Psoas muscle (tissue), 8 donors: ENCODE measurements at regions of chr2 and their contacts with region 1.

Region 1: GRCh38 chr2:98157557-98157956 is 70.6 kb downstream of the VWA3B start:
- DNase-seq: no peak
- ATAC-seq: no peak
- H3K4me3 ChIP-seq: no peak overlapping the region
- H3K27ac ChIP-seq: peak overlapping the region; percentile 94
- H3K4me1 ChIP-seq: peaks cover 50% of the 10 kb centered on the region
- H3K27me3 ChIP-seq: no peaks in the 10 kb centered on the region
- CTCF ChIP-seq: no peak

Region 2: DNA sequence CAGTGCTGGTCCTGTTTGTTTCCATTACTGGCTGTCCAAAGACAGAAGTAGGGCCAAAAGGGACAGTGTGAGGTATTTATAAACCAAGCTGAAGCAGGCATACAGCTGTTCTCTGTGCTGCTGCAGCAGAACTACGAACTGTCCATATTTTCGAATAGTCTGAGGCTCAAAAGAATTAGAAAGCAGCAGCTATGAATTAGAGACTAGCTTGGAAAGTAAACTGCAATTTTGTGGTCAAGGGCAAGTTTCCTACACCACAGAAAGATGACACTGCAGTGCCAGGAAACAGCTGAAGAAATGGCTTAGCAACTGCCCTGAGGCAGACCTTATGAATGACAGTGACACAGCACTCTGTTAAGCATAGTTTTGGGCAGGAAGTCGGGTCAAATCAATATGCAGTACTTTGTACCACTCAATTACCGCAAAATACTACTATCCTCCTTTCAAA is 287.1 kb before region 1 on chr2:
- intact Hi-C with region 1: loop called in 1 of 2 experiments (anchors 5 kb)
- DNase-seq: no peak
- ATAC-seq: peak; percentile 84 to 91 (median 86)
- H3K4me3 ChIP-seq: peak overlapping the region; percentile 33
- H3K27ac ChIP-seq: peak overlapping the region; percentile 93
- H3K4me1 ChIP-seq: peaks cover 43% of the 10 kb centered on the region
- H3K27me3 ChIP-seq: no peaks in the 10 kb centered on the region
- CTCF ChIP-seq: no peak

Region 3: DNA sequence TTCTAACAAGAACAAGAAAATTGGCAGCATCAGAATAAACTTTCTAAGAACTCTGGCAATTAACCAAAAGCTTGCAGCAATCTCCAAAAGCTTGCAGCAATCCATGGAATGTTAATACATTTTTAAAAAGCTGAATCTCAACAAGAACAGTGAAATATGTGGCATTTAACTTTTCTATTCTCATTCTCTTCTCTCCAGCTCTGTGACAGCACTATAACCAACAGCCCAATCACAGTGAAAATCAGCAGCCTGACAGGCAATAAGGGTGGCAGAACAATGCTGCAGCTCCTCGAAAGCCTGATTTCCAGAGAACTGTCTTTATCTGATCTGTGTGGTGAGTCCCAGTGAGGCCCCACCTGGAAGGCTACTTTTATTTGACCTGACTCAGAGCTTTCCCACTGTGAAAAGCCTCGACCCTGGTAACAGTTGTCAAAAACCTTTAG is 221.8 kb before region 1 on chr2:
- intact Hi-C with region 1: loop called in 1 of 2 experiments (anchors 10 kb)
- DNase-seq: no peak
- ATAC-seq: peak; percentile 23 to 38 (median 36)
- H3K4me3 ChIP-seq: peak overlapping the region; percentile 13
- H3K27ac ChIP-seq: peak overlapping the region; percentile 73
- H3K4me1 ChIP-seq: peaks cover 59% of the 10 kb centered on the region
- H3K27me3 ChIP-seq: no peaks in the 10 kb centered on the region
- CTCF ChIP-seq: no peak

Region 4: DNA sequence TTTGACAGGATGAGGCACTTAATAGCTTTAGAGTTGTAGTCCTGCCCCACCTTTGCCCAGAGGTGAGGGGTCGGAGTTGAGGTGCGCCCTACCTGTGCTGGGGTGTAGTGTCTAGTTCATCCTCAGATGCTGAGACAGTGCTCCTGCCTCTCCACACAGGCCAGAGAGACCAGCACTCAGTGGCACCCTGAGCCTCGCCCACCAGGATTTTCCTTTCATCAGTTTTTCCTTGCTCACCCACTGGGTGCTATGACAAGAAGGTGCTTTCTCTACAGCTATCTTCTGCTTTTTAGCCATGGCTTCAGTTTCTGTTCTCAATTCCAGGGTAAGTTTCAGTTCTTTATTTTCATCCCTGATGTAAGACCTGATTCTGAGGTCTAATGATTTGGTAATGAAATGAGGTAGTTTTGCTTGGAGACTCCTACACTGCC is 145.0 kb before region 1 on chr2:
- intact Hi-C with region 1: loop called in 1 of 2 experiments (anchors 1 kb)
- DNase-seq: no peak
- ATAC-seq: no peak
- H3K4me3 ChIP-seq: no peak overlapping the region
- H3K27ac ChIP-seq: peak overlapping the region; percentile 89
- H3K4me1 ChIP-seq: peaks cover 28% of the 10 kb centered on the region
- H3K27me3 ChIP-seq: no peaks in the 10 kb centered on the region
- CTCF ChIP-seq: no peak

Region 5: DNA sequence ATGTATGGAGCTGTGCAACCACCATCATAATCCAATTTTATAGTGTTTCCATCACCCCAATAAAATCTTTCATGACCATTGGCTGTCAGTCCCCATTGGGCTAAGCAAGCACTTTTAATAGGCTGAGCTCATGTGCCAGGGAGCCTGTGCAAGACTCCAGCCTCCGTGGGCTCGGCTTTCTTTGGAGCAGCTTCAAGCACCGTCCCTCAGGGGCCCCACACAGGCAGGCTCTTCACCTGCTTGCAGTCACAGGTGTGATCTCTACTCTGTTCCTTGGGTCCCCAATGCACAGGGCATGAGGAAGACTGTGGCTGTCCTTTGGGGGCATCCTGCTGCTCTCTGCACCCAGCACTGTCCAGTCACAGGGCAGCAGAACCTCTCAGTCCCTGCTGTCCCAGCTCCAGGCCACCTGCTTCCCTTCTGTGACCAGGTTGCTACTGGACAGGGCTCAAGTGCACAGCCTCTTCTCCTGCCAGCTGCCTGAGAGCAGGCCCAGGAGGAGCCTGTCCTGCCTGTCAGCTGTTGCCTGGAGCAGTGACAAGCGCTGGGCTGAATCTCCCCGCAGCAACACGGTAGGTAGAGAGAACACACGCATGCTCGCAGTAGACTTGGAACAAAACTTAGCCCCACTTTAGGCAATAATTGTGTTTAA is 121.1 kb before region 1 on chr2:
- intact Hi-C with region 1: loop called in 1 of 2 experiments (anchors 5 kb)
- DNase-seq: peak; percentile 57 to 79
- ATAC-seq: peak; percentile 93 to 97 (median 94)
- H3K4me3 ChIP-seq: no peak overlapping the region
- H3K27ac ChIP-seq: peak overlapping the region; percentile 76
- H3K4me1 ChIP-seq: peaks cover 37% of the 10 kb centered on the region
- H3K27me3 ChIP-seq: no peaks in the 10 kb centered on the region
- CTCF ChIP-seq: no peak

Region 6: DNA sequence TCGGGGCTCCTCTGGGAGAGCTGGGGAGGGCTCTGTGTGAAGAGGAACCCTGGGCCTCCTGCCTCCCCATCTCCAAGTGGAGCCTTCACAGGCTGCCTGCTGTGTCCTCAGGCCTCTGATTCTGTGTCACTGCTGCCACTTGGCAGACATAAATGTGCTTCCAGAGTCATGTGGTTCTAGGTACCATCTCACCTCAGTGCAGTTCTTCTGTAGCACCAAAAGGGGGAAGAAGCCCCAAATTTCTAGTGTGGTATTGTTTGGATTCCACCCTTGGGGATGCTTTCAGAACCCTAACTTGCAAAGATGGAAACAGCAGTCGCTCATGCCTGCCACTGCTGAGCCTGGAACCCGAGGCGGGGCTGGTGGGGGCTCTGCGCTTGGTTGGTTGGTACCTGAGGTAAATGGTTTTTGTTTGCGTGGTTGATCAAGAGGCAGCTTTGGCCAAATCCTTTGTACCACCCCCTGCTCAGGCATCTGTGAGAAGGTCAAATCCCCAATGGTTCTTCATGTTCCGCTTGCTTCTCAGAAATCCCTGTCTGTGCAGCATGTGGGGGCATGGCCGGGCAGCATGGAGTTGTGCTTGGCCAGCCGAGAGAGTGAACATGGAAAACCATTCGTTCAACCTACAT is 423.2 kb after region 1 on chr2:
- intact Hi-C with region 1: no loop called
- DNase-seq: peak in 1 of 2 donors; percentile 28
- ATAC-seq: no peak
- H3K4me3 ChIP-seq: no peak overlapping the region
- H3K27ac ChIP-seq: no peak overlapping the region
- H3K4me1 ChIP-seq: no peaks in the 10 kb centered on the region
- H3K27me3 ChIP-seq: no peaks in the 10 kb centered on the region
- CTCF ChIP-seq: no peak